ENCODE measurements at regions of chr2 and their contacts with region 1.

Region 1: DNA sequence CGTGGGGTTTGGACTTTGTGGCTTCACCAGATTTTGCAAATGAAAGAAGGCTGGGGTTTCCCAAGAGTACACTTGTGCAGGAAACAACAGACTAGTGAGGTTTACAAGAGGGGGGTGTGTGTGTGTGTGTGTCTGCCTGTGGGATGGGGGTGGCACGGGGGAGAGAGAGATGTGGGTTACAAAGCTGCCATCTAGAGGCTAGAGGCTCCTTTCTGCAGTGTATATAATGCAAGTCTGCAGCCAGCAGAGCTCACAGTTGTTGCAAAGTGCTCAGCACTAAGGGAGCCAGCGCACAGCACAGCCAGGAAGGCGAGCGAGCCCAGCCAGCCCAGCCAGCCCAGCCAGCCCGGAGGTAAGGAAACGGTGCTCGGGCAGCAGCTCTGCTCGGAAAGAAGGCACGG is at the start of gene ACKR3:
- DNase-seq: peak; percentile 65
- H3K4me3 Mint-ChIP-seq: peak within 1 kb of the TSS; percentile 30
- H3K27ac Mint-ChIP-seq: peak within 1 kb of the TSS; percentile 29
- H3K4me1 Mint-ChIP-seq: peaks cover 19% of the 10 kb centered on the region
- H3K27me3 Mint-ChIP-seq: peaks cover 12% of the 10 kb centered on the region
- total RNA-seq, gene ACKR3: 1.8 and 2.7 TPM in 2 replicates

Region 2: DNA sequence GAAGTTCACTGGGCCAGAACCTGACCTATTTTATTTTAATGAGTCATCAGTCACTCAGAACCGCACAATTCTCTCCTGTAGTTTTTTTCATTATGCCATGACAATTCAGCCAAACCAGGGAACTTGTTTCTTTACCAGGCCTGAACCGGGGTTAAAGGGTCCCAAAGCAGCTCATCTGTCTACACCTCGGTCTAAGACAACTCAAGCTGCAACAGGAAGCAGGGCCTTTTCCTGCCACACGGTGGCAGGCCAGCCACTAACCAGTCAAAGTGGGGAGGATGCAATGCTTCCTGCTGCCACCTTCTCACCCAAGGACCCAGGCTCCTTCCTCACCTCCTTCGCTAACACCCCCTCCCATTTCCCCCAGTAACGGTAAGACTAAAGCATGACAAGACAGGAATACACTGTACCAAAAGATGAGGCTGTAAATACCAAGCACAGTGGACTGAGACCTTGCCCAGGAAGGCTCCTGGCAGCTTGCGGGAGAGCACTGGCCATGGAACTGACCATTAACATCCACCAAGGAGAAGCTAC is 56.6 kb before region 1 on chr2:
- intact Hi-C with region 1: loop called (anchors 1 kb)
- DNase-seq: peak; percentile 57
- H3K4me3 Mint-ChIP-seq: no peak overlapping the region
- H3K27ac Mint-ChIP-seq: no peak overlapping the region
- H3K4me1 Mint-ChIP-seq: no peaks in the 10 kb centered on the region
- H3K27me3 Mint-ChIP-seq: peaks cover 23% of the 10 kb centered on the region

Region 3: DNA sequence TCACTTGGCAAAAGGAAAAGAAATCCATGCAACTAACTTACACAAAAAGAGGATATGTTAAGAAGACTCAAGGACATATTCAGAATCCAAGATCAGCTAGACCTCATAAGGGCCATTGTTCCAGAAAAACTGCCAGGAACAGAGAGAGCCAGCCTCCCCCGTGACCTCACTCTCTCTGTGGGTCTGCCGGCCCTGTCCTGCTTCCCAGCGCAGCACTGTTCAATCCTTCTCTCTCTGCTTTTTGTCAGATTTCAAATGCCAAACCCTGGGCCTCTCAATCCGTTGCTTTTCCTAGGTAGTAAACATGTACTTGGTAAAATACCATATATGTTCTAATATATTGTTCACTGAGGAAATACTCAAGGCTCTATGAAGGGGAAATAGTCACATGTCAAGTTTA is 40.0 kb before region 1 on chr2:
- intact Hi-C with region 1: loop called (anchors 5 kb)
- DNase-seq: no peak
- H3K4me3 Mint-ChIP-seq: no peak overlapping the region
- H3K27ac Mint-ChIP-seq: no peak overlapping the region
- H3K4me1 Mint-ChIP-seq: peaks cover 7% of the 10 kb centered on the region
- H3K27me3 Mint-ChIP-seq: peaks cover 8% of the 10 kb centered on the region

Region 4: DNA sequence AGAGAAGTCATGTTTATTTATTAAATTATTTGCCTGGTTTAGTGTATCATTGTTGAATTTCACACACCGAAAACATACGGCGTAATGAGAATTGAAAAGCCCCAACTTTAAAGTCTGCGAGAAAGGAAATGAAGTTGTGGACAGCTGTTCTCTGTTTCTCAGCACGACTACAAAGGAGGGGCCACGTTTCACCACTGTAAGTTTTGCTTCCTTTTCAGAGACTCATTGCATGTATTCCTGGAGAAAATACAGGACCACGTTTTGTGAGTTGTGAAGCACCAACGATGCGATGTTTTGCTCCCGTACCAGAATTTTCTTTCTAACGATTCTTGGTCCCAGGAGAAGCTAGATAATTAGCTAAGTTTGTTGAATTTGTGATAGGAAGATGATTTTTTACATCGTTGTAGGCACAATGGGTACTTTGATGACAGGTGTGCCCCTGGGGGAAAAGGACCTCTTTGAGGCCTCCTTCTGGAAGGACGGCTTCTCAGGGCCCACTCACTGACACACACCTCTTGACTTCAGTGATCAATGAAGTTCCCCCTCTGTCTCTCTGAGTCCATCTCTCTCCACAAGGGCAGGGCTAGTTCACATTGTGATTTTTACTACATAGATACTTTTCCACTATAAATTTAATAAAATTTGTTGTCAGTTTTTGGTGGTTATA is 23.6 kb before region 1 on chr2:
- intact Hi-C with region 1: loop called (anchors 2 kb)
- DNase-seq: no peak
- H3K4me3 Mint-ChIP-seq: peak overlapping the region; percentile 68
- H3K27ac Mint-ChIP-seq: peak overlapping the region; percentile 93
- H3K4me1 Mint-ChIP-seq: peaks cover 76% of the 10 kb centered on the region
- H3K27me3 Mint-ChIP-seq: no peaks in the 10 kb centered on the region

Measured in activated T-helper 2 cell treated with anti-CD3 and anti-CD28 coated beads, Interferon-gamma antibody, Interleukin-2, Interleukin-4, amounts not matched to agents 10 μg/mL and 5 μg/mL and 100 μg/mL, durations not matched to agents 14 hours and 24 hours and 36 hours (primary cell).